ENCODE measurements at regions of chr9 and their contacts with region 1.

Region 1: GRCh38 chr9:38057416-38058195 is 11.4 kb downstream of the SHB start:
- DNase-seq: no peak
- ATAC-seq: peak; percentile 57

Region 2: GRCh38 chr9:37390759-37391158 is 666.8 kb before region 1 on chr9:
- intact Hi-C with region 1: no loop called
- DNase-seq: no peak
- ATAC-seq: no peak

Region 3: DNA sequence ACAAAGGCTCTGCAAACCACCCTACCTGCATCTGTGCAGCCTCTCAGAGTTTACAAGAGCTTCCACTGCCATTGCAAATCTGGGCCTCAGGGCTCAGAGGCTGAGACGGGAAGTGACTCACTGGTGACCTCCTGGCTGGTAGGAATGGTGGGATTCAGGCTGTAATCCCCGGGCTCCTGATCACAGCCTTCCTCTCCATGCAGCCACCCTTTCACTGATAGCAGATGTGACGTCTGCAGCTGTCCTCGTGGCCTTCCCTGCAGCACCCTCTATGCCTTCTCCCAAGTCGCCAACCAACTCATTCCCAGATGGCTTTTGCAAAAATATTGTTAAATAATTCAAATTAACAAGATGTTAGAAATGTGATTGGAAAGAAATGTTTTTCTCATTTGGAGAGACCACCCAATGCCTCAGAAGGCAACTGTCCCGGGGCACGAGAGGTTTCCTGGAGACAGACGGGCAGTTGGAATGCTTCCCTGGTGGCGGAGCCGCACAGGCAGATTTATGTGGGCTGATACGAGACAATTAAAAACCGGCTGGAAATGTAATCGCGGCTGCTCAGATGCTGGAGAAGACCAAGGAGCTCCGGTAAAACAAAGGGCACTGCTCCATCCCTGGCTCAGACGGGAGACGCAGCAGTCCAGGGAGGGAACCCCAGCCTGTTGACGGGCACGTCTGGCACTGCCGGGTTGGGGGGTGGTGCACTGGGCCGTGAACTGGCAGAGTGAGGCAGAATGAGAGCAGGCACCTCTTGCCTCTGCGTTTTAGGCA is 119.3 kb before region 1 on chr9:
- intact Hi-C with region 1: no loop called
- DNase-seq: peak; percentile 60
- ATAC-seq: peak; percentile 47

Region 4: GRCh38 chr9:37994639-37995347 is 62.8 kb before region 1 on chr9:
- intact Hi-C with region 1: loop called (anchors 5 kb)
- DNase-seq: peak; percentile 91
- ATAC-seq: peak; percentile 86

Region 5: GRCh38 chr9:38010918-38011704 is 46.5 kb before region 1 on chr9:
- intact Hi-C with region 1: loop called (anchors 5 kb)
- DNase-seq: no peak
- ATAC-seq: no peak

Region 6: DNA sequence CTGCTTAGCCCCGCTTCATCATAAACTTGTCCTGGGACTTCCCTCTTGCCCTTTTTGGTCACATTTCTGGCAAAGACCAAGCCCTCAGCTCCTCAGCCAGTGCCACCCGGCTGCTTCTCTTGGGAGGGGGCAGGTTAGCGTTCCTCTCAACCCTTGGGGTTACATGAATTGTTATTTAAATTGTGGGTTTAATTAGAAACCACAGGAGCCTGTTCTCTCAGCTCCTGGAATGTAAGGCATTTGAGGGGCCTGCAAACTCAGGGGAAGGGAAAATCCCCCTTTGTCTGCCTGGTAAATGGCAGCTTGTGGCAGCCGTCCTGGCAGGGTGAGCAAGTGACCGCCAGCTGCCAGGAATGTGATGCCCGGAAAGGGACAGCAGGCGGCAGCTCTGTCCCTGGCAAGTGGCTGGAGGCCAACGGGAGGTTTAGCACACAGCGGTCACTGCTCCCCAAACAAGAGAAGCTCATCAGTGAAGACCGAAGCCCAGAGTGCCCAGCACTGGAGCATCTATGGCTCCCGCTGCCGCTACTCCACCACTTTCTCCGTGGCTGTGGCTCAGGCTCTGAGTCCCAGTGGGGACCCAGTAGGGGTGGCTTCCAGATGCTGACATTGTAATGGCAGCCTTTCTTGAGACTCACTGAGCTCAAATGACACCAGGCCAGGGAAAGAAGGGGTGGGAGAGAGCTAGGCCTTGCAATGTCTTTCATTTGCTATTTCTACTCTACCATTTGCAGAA is 40.3 kb before region 1 on chr9:
- intact Hi-C with region 1: loop called (anchors 2 kb)
- DNase-seq: no peak
- ATAC-seq: peak; percentile 72

Region 7: GRCh38 chr9:38026021-38026809 is 31.4 kb before region 1 on chr9:
- intact Hi-C with region 1: loop called (anchors 2 kb)
- DNase-seq: no peak
- ATAC-seq: peak; percentile 76

Region 8: GRCh38 chr9:38068866-38069629 is 11.4 kb after region 1 on chr9 and contains the start of gene SHB:
- intact Hi-C with region 1: loop called (anchors 1 kb)
- DNase-seq: peak; percentile 92
- ATAC-seq: peak; percentile 90
- total RNA-seq, gene SHB: 14.7 TPM